ENCODE measurements at regions of chr17 and their contacts with region 1.

Region 1: GRCh38 chr17:43483674-43484372 is at the start of gene DHX8:
- DNase-seq: peak; percentile 97
- H3K4me3 ChIP-seq: peak within 1 kb of the TSS; percentile 66
- H3K27me3 ChIP-seq: no peaks in the 10 kb centered on the region
- CTCF ChIP-seq: peak; percentile 100
- polyA plus RNA-seq, gene DHX8: 40.0 and 42.7 TPM in 2 replicates

Region 2: GRCh38 chr17:43360739-43361505 is 122.9 kb before region 1 on chr17:
- CTCF ChIA-PET with region 1: interaction called, 8 read pairs
- POLR2A ChIA-PET with region 1: interaction called, 18 read pairs
- DNase-seq: peak; percentile 89
- H3K4me3 ChIP-seq: peak overlapping the region; percentile 51
- H3K27me3 ChIP-seq: no peaks in the 10 kb centered on the region
- CTCF ChIP-seq: no peak

Region 3: DNA sequence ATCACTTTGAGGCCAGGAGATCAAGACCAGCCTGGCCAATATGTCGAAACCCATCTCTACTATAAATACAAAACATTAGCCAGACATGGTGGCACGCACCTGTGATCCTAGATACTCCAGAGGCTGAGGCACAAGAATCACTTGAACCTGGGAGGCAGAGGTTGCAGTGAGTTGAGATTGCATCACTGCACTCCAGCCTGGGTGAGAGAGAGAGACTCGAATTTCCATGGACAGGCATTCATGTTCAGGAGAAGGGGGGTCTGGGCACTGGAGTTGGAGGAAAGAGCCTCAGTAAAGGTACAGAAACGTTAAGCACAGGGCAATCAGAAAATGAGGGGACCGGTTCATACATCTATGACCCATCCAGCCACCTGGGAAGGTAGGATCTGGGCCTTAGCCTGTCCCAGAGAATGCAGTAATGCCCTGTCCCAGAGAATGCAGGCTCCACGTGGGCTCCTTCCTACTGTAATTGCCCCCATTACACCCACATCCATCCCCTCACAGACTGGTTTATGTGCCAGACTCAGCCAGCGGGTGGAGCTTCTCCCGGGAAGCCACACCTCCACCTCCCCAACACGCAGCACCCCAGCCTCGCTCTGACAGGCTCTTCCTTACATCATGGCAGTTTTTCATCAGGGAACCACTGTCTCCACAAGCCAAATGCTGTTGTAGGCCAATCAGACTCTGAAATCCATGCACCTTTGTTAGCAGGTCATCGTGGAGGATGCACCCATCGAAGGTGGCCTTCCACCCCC is 106.6 kb before region 1 on chr17:
- CTCF ChIA-PET with region 1: interaction called, 11 read pairs
- POLR2A ChIA-PET with region 1: no interaction called
- DNase-seq: no peak
- H3K4me3 ChIP-seq: no peak overlapping the region
- H3K27me3 ChIP-seq: no peaks in the 10 kb centered on the region
- CTCF ChIP-seq: no peak

Region 4: DNA sequence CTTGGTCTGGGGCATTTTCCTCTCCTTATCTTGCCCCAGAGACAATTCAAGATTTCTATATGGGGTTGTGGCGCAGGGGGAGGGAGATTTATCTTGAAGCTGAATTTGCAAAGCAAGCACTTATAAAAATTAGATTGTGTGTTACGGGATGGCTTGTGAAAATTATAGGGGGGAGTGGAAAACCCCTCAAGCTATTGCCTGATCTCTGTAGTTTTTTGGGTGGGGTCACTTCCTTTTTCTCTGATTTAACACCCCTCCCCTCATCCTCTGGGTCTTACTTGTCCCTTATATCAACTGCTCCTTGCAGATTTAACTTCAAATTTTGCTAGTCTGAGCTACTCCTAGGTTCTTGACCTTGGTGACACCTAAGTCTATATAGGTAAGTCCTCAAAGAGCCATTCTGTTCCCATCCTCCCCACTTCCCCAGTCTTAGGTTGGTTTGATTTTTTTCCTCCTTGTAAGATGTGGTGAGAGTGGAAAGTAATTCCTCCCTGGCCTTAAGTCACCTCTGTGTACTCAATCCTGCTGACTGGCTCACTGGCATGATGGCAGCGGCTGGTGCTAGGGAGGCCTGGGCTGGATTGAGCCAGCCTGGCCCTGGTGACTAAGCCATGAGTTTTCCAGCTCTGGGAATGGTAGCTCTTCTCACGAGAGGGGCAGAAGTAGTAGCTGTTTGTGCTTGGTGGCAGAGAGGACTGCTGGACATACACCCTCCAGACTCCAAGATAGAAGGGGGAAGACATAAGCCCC is 82.7 kb before region 1 on chr17:
- CTCF ChIA-PET with region 1: interaction called, 395 read pairs
- POLR2A ChIA-PET with region 1: interaction called, 14 read pairs
- DNase-seq: no peak
- H3K4me3 ChIP-seq: peak overlapping the region; percentile 92
- H3K27me3 ChIP-seq: no peaks in the 10 kb centered on the region
- CTCF ChIP-seq: no peak

Region 5: GRCh38 chr17:43418441-43419374 is 65.1 kb before region 1 on chr17:
- CTCF ChIA-PET with region 1: interaction called, 39 read pairs
- POLR2A ChIA-PET with region 1: no interaction called
- DNase-seq: peak; percentile 76
- H3K4me3 ChIP-seq: no peak overlapping the region
- H3K27me3 ChIP-seq: no peaks in the 10 kb centered on the region
- CTCF ChIP-seq: no peak; the same call in 1 of the 2 replicates

Region 6: GRCh38 chr17:43467981-43468581 is 15.7 kb before region 1 on chr17:
- CTCF ChIA-PET with region 1: interaction called, 51 read pairs
- POLR2A ChIA-PET with region 1: no interaction called
- DNase-seq: peak; percentile 93
- H3K4me3 ChIP-seq: no peak overlapping the region
- H3K27me3 ChIP-seq: no peaks in the 10 kb centered on the region; the same call in 1 of the 2 replicates
- CTCF ChIP-seq: no peak

Region 7: GRCh38 chr17:43556292-43556691 is 72.5 kb after region 1 on chr17:
- CTCF ChIA-PET with region 1: no interaction called
- POLR2A ChIA-PET with region 1: no interaction called
- DNase-seq: peak; percentile 83
- H3K4me3 ChIP-seq: no peak overlapping the region
- H3K27me3 ChIP-seq: no peaks in the 10 kb centered on the region
- CTCF ChIP-seq: no peak

Region 8: GRCh38 chr17:43661699-43662412 is 178.0 kb after region 1 on chr17 and contains the start of gene MEOX1:
- CTCF ChIA-PET with region 1: no interaction called
- POLR2A ChIA-PET with region 1: no interaction called
- DNase-seq: peak; percentile 41
- H3K4me3 ChIP-seq: no peak within 1 kb of the TSS
- H3K27me3 ChIP-seq: peaks cover 3% of the 10 kb centered on the region; the same call in 1 of the 2 replicates
- CTCF ChIP-seq: no peak
- polyA plus RNA-seq, gene MEOX1: not detected in 2 replicates